SK-N-SH (cell line): ENCODE measurements at regions of chr19 and their contacts with region 1.

Region 1: DNA sequence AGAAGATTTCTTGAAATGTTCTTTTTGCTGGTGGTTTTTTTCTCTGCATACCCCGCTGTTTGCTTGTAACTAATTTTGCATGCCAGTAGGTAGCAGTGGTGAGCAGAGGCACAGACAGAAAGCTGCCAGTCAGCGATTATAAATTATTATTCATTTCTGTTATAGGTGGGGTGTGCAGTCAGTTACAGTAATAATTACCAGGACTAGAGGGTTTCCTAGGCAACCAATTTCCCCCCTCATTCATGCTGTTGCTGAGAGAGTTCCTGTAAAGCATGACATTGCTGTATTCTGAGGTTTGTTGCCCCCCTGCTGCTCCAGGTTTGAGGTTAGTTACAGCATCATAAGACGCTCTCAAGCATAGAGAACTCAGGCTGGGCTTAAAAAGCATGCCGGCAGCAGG is 104.5 kb downstream of the URI1 start:
- DNase-seq: peak; percentile 50
- H3K4me3 ChIP-seq: no peak overlapping the region
- H3K27ac ChIP-seq: no peak overlapping the region
- H3K4me1 ChIP-seq: peaks cover 0 to 13% of the 10 kb centered on the region in 2 experiments; a peak in 3 of 4 replicates
- H3K27me3 ChIP-seq: no peaks in the 10 kb centered on the region
- CTCF ChIP-seq: peak; percentile 47; the same call in 1 of the 2 replicates
- EP300 ChIP-seq: no peak
- RAD21 ChIP-seq: peak; percentile 88

Region 2: DNA sequence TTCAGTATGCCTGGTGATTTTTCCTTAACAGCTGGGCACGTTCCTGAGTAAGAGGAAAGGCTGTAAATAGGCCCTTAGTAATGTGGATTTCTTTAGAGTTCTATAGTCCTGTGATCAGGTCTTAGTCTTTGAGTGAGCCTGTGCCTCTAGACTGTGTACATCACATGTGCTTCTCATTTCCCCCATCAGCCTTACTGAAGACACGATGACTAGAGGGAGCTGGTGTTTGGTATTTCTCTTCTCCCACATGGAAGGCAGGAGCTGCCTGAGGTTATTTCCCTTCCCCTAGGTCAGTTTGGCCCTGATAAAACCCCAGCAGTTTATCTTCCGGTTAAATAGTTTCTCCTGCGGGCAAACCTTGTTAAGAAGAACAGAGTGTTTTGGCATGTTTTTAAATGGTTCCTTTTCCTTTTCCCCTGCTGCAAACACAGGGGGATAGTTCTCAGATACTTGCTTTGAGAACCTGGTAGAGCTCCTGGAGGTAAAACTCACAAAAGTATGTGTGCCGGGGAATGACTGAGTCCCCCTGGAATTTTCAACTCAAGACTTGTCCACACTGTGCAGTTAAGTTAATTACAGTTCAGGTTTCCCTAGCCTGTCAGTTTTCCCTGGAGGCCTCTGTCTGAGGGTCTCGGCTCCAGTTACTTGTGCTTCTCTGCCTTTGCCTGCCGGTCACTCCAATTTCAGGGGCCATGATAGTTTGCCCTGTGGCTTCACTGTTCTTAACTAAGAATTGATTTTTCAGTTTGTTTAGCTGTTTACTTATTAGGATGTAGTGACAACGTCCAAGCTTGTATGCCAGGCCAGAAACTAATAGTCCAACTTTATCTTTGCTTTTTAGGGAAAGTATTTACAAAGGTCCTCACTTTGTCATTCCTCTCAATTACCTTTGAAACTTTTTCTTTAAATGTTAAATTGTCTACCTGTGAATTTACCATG is 10.1 kb before region 1 on chr19:
- CTCF ChIA-PET with region 1: interaction called, 16 read pairs
- POLR2A ChIA-PET with region 1: no interaction called
- DNase-seq: no peak
- H3K4me3 ChIP-seq: no peak overlapping the region
- H3K27ac ChIP-seq: no peak overlapping the region; a peak in 1 of 4 replicates
- H3K4me1 ChIP-seq: no peaks in the 10 kb centered on the region
- H3K27me3 ChIP-seq: no peaks in the 10 kb centered on the region
- CTCF ChIP-seq: no peak
- EP300 ChIP-seq: no peak
- RAD21 ChIP-seq: no peak

Region 3: DNA sequence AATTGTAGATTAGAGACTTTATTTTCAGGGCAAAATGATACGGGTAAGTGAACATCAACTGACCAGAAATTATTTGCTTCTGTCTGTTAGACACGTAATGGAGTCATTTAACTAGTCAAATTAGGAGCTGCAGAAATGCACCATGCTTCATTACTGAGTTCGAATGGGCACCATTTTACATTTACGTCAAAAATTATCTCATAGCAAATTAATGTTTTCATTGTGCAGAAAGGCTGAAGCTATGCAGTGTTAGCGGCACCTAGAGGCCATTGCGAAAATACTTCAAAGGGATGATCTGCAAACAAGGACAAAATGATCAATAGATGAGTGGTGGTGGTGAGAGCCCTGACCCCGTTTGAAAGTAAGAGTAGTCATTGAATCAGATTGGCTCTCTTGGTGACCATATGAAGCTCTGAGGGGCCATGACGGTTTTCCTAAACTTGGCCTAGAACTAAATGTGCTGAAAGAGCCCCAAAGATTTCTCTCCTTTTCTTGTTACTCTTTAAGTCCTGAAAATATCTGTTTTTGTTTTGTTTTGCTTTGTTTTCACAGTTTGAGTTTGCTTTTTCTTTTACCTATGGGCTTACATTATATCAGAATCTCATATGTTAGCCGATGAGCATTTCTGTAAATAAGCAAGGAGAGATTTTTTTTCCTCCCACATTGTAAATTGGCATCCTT is 603.6 kb after region 1 on chr19:
- CTCF ChIA-PET with region 1: interaction called, 17 read pairs
- POLR2A ChIA-PET with region 1: no interaction called
- DNase-seq: peak; percentile 70
- H3K4me3 ChIP-seq: peak overlapping the region in 1 of 2 experiments; percentile 22; a peak in 1 of 4 replicates
- H3K27ac ChIP-seq: peak overlapping the region in 1 of 2 experiments; percentile 39; a peak in 2 of 4 replicates
- H3K4me1 ChIP-seq: peaks cover 0 to 10% of the 10 kb centered on the region in 2 experiments; a peak in 2 of 4 replicates
- H3K27me3 ChIP-seq: no peaks in the 10 kb centered on the region
- CTCF ChIP-seq: peak; percentile 81
- EP300 ChIP-seq: peak in 1 of 2 experiments; percentile 47; a peak in 1 of 4 replicates
- RAD21 ChIP-seq: peak; percentile 97